Naive thymus-derived CD4-positive, alpha-beta T cell (primary cell): ENCODE measurements at regions of chr10 and their contacts with region 1.

Region 1: DNA sequence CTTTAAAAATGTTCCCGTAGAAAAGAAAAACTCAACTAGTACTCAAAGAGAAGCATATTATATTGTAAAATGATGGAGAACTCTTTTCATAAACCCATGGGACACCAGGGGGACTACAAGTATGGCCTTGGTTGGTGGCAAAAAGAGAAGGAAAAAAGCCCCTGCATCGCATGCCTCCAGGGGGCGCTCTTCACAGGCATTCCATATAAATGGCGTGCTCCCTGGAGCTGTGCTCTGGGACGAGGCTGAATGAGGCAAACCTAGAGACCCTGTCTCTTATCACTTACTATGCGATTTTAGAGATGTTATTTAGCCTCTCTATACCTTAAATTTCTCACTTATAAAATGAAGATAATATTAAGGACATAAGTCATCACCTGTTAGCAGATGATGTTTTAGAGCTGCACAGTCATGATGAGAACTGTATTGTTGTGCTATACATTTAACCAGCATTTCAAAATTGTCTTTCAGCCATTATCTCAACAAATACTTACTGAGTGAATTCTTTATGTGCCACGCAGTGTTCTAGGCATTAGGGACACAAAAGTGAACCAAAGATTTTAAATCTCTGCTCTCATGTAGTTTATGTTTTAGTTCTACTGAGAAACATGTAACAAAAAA is 105.8 kb downstream of the ARHGAP21 start:
- DNase-seq: peak; percentile 28 to 62 (median 46)
- ATAC-seq: peak; percentile 58
- H3K4me3 ChIP-seq: no peak overlapping the region
- H3K4me3 Mint-ChIP-seq: peak overlapping the region in 9 of 10 donors; percentile 34 to 75 (median 69)
- H3K27ac ChIP-seq: peak overlapping the region; percentile 5
- H3K27ac Mint-ChIP-seq: peak overlapping the region in 8 of 9 donors; percentile 65 to 97 (median 91)
- H3K4me1 ChIP-seq: peaks cover 0 to 16% of the 10 kb centered on the region in 2 donors
- H3K4me1 Mint-ChIP-seq: peaks cover 11 to 55% (median 42%) of the 10 kb centered on the region in 7 donors
- H3K27me3 ChIP-seq: no peaks in the 10 kb centered on the region
- H3K27me3 Mint-ChIP-seq: no peaks in the 10 kb centered on the region

Region 2: GRCh38 chr10:23955456-23956225 is 662.2 kb before region 1 on chr10:
- CTCF ChIA-PET with region 1: no interaction called
- POLR2A ChIA-PET with region 1: no interaction called
- intact Hi-C with region 1: no loop called
- DNase-seq: no peak
- ATAC-seq: no peak
- H3K4me3 ChIP-seq: no peak overlapping the region
- H3K4me3 Mint-ChIP-seq: no peak overlapping the region
- H3K27ac ChIP-seq: no peak overlapping the region
- H3K27ac Mint-ChIP-seq: no peak overlapping the region
- H3K4me1 ChIP-seq: no peaks in the 10 kb centered on the region
- H3K4me1 Mint-ChIP-seq: peaks cover 0 to 5% (median 0%) of the 10 kb centered on the region in 7 donors
- H3K27me3 ChIP-seq: no peaks in the 10 kb centered on the region
- H3K27me3 Mint-ChIP-seq: no peaks in the 10 kb centered on the region

Region 3: DNA sequence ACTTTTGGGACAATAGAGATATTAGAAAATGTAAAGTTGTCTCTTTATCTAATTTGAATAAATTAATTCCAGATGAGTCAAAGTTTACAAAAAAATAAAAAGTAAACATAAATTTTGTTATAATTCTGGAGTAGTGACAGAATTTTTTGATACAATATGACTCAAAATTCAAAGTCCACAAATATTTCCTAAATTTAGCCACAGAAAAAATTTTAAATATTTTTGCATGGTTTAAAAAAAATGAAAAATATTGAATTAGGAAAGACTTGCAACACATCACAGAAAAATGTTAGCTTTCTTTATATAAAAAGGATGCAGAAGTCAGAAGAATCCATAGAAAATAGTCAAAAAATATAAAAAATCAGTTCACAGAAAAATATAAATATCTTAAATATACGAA is 11.9 kb before region 1 on chr10:
- CTCF ChIA-PET with region 1: interaction called, 4 read pairs
- POLR2A ChIA-PET with region 1: interaction called, 4 read pairs
- intact Hi-C with region 1: loop called in 1 of 2 experiments (anchors 1 kb)
- DNase-seq: no peak
- ATAC-seq: no peak
- H3K4me3 ChIP-seq: no peak overlapping the region
- H3K4me3 Mint-ChIP-seq: no peak overlapping the region
- H3K27ac ChIP-seq: no peak overlapping the region
- H3K27ac Mint-ChIP-seq: no peak overlapping the region
- H3K4me1 ChIP-seq: no peaks in the 10 kb centered on the region
- H3K4me1 Mint-ChIP-seq: peaks cover 0 to 22% (median 4%) of the 10 kb centered on the region in 7 donors
- H3K27me3 ChIP-seq: no peaks in the 10 kb centered on the region
- H3K27me3 Mint-ChIP-seq: no peaks in the 10 kb centered on the region

Region 4: DNA sequence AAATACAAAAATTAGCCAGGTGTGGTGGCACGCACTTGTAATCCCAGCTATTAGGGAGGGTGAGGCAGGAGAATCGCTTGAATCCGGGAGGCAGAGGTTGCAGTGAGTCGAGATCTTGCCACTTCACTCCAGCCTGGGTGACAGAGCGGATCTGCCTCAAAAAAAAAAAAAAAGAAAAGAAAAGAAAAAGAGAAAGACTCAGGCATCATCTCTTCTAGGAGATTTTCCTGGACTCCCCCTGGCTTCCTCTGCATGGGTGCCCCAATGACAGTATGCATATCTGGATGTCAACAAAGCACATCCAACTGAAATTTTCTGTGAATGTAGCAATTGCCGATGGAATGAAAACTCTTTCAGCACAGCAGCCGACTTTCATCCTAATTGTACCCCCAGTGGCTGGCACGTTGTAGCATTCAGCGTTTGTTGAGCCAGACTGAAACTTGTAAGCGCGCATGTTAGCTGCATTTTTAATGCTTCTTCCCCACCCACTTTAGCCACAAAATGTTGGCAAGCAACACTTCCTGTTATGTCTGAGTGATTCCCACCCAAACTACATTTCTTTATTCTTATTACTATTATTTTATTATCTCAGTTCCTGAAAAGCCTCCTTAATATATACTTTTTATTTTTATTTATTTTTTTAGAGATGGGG is 264.3 kb after region 1 on chr10:
- CTCF ChIA-PET with region 1: interaction called, 4 read pairs
- POLR2A ChIA-PET with region 1: interaction called, 5 read pairs
- intact Hi-C with region 1: loop called in 1 of 2 experiments (anchors 5 kb)
- DNase-seq: peak in 7 of 9 donors; percentile 42 to 68 (median 63)
- ATAC-seq: peak; percentile 81
- H3K4me3 ChIP-seq: peak overlapping the region; percentile 44
- H3K4me3 Mint-ChIP-seq: peak overlapping the region; percentile 72 to 88 (median 86)
- H3K27ac ChIP-seq: peak overlapping the region; percentile 53
- H3K27ac Mint-ChIP-seq: peak overlapping the region; percentile 36 to 99 (median 95)
- H3K4me1 ChIP-seq: peaks cover 15 to 54% of the 10 kb centered on the region in 2 donors
- H3K4me1 Mint-ChIP-seq: peaks cover 27 to 72% (median 65%) of the 10 kb centered on the region in 7 donors
- H3K27me3 ChIP-seq: no peaks in the 10 kb centered on the region
- H3K27me3 Mint-ChIP-seq: no peaks in the 10 kb centered on the region

Region 5: DNA sequence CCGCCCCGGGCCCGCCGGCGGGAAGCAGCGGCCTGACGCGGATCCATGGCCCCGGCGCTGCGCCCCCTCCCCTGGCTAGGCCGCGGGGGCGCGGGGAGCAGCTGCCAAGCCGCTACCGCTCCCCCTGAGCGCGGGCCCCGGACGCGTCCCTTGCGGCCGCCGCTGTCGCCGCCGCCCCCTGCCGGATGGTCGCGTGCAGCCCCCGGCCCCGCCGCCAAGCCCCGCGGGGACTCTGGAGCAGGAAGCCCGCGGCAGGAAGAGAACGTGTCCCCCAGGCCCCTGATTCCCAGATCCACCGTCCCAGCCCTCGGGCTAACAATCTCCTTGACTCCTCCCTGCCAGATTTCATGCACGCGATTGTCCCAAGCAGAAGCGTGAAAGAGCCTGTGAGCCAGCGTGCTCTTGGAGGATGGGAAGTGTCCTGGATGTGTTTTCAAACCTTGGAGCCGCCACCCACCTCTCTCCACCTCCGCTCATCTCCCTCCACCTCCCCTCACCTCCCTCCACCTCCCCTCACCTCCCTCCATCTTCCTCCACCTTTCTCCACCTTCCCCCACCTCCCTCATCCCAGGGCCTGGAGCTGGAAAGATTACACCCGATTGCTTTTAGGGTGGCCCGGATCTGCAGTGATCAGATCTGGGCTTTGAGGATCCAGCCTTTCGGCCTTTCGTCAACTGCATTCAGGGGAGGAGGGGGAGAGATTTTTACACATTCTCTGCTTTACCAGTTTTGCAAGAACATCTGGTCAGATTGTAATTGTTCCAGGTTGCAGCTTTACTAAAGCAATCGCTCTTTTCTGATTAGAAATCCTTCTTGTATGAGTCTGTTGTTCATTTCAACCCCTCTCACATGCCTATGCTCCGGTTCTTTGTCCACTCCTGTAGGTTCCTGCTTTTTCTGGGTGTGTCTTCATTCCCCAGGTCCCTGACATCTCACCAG is 335.1 kb after region 1 on chr10:
- CTCF ChIA-PET with region 1: interaction called, 4 read pairs
- POLR2A ChIA-PET with region 1: interaction called, 3 read pairs
- intact Hi-C with region 1: loop called in 1 of 2 experiments (anchors 5 kb)
- DNase-seq: peak; percentile 31 to 66 (median 55)
- ATAC-seq: peak; percentile 89
- H3K4me3 ChIP-seq: peak overlapping the region; percentile 55
- H3K4me3 Mint-ChIP-seq: peak overlapping the region; percentile 76 to 89 (median 86)
- H3K27ac ChIP-seq: peak overlapping the region; percentile 59
- H3K27ac Mint-ChIP-seq: peak overlapping the region; percentile 49 to 91 (median 83)
- H3K4me1 ChIP-seq: peaks cover 4 to 6% of the 10 kb centered on the region in 2 donors
- H3K4me1 Mint-ChIP-seq: peaks cover 7 to 30% (median 18%) of the 10 kb centered on the region in 7 donors
- H3K27me3 ChIP-seq: no peaks in the 10 kb centered on the region
- H3K27me3 Mint-ChIP-seq: no peaks in the 10 kb centered on the region

Region 6: DNA sequence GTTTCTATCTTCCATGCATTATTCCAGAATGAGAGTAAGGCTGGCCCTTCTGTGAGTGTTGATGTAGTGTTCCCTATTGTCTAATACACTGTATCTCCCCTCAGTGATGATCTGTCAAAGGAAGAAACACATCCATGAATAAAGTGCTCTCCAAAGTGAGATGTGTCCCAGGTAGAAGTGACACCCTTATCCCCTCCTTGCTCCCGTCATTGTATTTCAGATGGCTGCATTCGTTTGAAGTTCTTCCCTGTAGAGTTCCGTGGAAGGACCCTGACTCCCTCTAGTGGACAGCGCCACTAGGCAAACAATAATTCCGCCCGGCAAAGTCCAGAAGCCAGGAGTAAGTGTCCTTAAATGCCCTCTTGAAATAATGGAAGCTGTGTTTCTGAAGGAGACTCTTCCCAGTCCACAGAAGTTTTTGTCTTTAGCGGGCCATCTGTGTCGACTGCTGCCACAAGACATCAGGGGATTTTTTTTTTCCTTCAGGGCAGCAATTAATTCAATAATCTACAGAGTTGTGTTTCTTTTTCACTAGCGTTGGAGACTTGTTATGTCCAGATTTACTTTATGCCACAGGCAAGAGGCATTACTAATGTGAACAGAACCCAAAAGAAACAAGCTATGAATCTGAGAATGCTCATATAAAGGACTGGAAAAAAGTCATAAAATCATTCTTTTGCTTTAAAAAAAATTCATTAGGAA is 463.1 kb after region 1 on chr10:
- CTCF ChIA-PET with region 1: interaction called, 3 read pairs
- POLR2A ChIA-PET with region 1: interaction called, 4 read pairs
- intact Hi-C with region 1: loop called (anchors 1 to 2 kb)
- DNase-seq: peak; percentile 4 to 53 (median 42)
- ATAC-seq: peak; percentile 79
- H3K4me3 ChIP-seq: no peak overlapping the region
- H3K4me3 Mint-ChIP-seq: no peak overlapping the region
- H3K27ac ChIP-seq: no peak overlapping the region
- H3K27ac Mint-ChIP-seq: no peak overlapping the region
- H3K4me1 ChIP-seq: peaks cover 0 to 4% of the 10 kb centered on the region in 2 donors
- H3K4me1 Mint-ChIP-seq: peaks cover 0 to 8% (median 4%) of the 10 kb centered on the region in 7 donors
- H3K27me3 ChIP-seq: peaks cover 0 to 4% of the 10 kb centered on the region in 2 donors
- H3K27me3 Mint-ChIP-seq: peaks cover 0 to 23% (median 5%) of the 10 kb centered on the region in 5 donors